ENCODE measurements at regions of chr5 and their contacts with region 1.

Region 1: GRCh38 chr5:68953875-68954617 is 139.8 kb upstream of the SLC30A5 start:
- DNase-seq: peak; percentile 16 to 20
- ATAC-seq: peak; percentile 77 to 80
- H3K4me3 ChIP-seq: no peak overlapping the region
- H3K27ac ChIP-seq: no peak overlapping the region
- H3K4me1 ChIP-seq: peaks cover 17 to 24% of the 10 kb centered on the region in 2 donors
- H3K27me3 ChIP-seq: no peaks in the 10 kb centered on the region
- CTCF ChIP-seq: no peak
- POLR2A ChIP-seq: no peak

Region 2: GRCh38 chr5:68484307-68485068 is 469.6 kb before region 1 on chr5:
- in situ Hi-C with region 1: no loop called
- intact Hi-C with region 1: loop called (anchors 10 kb)
- DNase-seq: no peak
- ATAC-seq: no peak
- H3K4me3 ChIP-seq: no peak overlapping the region
- H3K27ac ChIP-seq: no peak overlapping the region
- H3K4me1 ChIP-seq: no peaks in the 10 kb centered on the region
- H3K27me3 ChIP-seq: no peaks in the 10 kb centered on the region
- CTCF ChIP-seq: no peak
- POLR2A ChIP-seq: no peak

Region 3: DNA sequence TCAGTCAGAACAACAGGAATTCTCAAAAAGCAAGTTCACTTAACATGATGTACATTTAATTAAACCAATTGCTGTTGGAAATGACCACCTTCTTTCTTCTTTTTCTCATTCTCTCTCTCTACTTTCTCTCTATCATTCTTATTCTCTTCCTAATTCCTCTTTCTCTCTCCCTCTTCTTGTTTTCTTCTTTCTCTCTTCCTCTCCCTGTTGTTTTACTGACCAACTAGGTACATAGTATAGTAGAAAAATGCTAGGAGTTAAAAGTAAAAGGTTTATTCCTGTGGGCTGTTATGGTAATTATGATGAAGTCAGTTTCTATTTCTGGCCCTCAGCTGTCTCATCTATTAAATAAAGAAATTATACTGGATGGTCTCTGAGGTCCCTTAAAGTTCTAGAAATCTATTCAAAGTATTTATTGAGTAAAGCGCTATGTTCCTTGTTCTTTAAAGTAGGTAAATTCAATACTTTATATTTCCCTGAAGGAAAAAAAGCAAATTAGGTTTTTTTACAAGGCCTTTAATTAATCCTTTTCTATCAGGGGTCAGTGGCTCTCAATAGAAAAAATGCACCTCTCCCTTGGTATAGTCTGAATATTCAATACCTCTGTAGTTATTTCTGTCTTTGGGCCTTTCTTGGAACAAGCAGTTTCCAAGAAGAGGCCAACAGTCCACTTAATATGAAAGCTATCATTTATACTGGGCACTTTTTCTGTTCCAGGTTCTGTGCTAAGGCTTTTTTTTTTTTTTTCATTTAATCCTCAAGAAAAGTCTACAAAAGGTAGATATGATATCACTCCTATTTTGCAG is 37.4 kb after region 1 on chr5:
- in situ Hi-C with region 1: no loop called
- intact Hi-C with region 1: no loop called
- DNase-seq: no peak
- ATAC-seq: no peak
- H3K4me3 ChIP-seq: no peak overlapping the region
- H3K27ac ChIP-seq: no peak overlapping the region
- H3K4me1 ChIP-seq: no peaks in the 10 kb centered on the region
- H3K27me3 ChIP-seq: no peaks in the 10 kb centered on the region
- CTCF ChIP-seq: no peak
- POLR2A ChIP-seq: no peak

Region 4: DNA sequence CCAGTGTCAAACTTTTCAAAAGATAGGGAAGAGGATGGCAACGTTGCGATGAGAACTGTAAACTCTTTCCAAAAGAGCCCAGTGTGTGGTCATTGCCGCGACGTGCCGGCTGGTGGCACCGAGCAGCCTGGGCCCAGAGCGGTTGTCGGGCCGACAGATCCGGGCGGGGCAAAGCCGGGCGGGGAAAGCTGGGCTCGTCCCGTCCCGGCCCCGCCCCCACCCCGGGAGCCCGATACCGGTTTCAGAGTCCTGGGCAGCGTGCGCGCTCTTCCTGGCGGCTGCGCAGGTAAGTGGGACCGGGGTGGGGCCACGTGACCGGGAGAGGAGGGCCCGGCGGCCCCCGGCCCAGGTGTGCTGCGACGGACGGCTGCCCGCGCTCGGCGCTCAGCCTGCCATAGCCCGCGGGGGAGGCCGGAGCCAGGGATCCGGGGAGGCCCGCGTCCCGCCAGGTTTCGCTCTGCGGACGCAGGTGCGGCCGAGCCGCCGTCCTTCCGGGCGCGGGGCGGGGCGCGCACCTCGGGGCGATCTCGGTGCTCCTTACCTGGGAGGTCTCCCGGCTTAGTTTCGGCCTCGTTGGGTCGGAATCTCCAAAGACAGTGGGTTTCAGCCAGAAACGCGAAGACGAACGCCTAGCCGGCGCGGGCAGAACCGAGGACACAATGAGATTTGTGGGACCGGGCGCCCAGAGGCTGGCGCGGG is 461.0 kb after region 1 on chr5 and contains the start of gene MARVELD2:
- in situ Hi-C with region 1: no loop called
- intact Hi-C with region 1: no loop called
- DNase-seq: no peak
- ATAC-seq: no peak
- H3K4me3 ChIP-seq: peak within 1 kb of the TSS in 3 of 4 donors; percentile 19 to 38 (median 29)
- H3K27ac ChIP-seq: no peak within 1 kb of the TSS
- H3K4me1 ChIP-seq: no peaks in the 10 kb centered on the region
- H3K27me3 ChIP-seq: no peaks in the 10 kb centered on the region
- CTCF ChIP-seq: no peak
- POLR2A ChIP-seq: no peak
- total RNA-seq, gene MARVELD2: 0.16 to 3.1 (median 1.4) TPM

Region 5: GRCh38 chr5:69462170-69462569 is 508.1 kb after region 1 on chr5:
- in situ Hi-C with region 1: no loop called
- intact Hi-C with region 1: no loop called
- DNase-seq: no peak
- ATAC-seq: no peak
- H3K4me3 ChIP-seq: no peak overlapping the region
- H3K27ac ChIP-seq: no peak overlapping the region
- H3K4me1 ChIP-seq: no peaks in the 10 kb centered on the region
- H3K27me3 ChIP-seq: no peaks in the 10 kb centered on the region
- CTCF ChIP-seq: no peak
- POLR2A ChIP-seq: no peak